ENCODE measurements at regions of chr15 and their contacts with region 1.

Region 1: DNA sequence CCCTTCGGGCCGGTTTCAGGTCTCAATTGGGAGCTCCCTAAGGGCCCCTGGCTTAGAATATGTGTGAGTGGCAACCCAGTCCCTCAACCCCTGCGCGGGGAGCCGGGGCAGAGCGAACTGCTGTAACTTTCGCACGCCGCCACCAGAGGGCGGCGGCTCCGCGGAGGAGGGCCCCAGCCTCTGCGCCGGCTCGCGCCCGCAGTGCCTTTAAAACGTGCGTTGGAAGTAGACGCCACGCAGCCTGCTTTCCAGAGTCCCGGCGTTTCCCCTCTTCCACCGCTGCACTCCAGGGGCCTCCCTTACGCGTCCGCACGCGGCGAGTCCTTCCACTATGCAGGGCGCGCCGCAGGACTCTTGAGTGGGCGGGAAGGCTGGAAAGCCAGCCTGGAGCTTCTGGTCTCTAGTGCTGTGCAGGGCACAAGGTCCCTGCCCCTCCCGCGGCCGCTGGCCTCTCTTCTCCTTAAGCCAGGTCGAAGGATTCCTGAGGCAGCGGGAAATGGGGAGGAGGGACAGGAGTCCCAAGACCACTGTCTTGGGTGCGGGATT is 23.7 kb upstream of the RNU6-1 start:
- DNase-seq: peak; percentile 63 to 93 (median 80)
- ATAC-seq: peak; percentile 98 to 99 (median 99)
- H3K4me3 ChIP-seq: peak overlapping the region in 3 of 4 donors; percentile 18 to 49 (median 38)
- H3K27ac ChIP-seq: peak overlapping the region in 1 of 4 donors; percentile 16
- H3K4me1 ChIP-seq: no peaks in the 10 kb centered on the region
- H3K27me3 ChIP-seq: no peaks in the 10 kb centered on the region
- CTCF ChIP-seq: peak; percentile 71 to 94 (median 87)

Region 2: GRCh38 chr15:68042156-68042854 is 178.8 kb after region 1 on chr15:
- intact Hi-C with region 1: loop called in 1 of 3 experiments (anchors 10 kb)
- DNase-seq: no peak
- ATAC-seq: peak; percentile 46 to 81 (median 68)
- H3K4me3 ChIP-seq: no peak overlapping the region
- H3K27ac ChIP-seq: peak overlapping the region in 1 of 4 donors; percentile 16
- H3K4me1 ChIP-seq: peaks cover 0 to 10% (median 6%) of the 10 kb centered on the region in 3 donors
- H3K27me3 ChIP-seq: no peaks in the 10 kb centered on the region
- CTCF ChIP-seq: no peak

Region 3: DNA sequence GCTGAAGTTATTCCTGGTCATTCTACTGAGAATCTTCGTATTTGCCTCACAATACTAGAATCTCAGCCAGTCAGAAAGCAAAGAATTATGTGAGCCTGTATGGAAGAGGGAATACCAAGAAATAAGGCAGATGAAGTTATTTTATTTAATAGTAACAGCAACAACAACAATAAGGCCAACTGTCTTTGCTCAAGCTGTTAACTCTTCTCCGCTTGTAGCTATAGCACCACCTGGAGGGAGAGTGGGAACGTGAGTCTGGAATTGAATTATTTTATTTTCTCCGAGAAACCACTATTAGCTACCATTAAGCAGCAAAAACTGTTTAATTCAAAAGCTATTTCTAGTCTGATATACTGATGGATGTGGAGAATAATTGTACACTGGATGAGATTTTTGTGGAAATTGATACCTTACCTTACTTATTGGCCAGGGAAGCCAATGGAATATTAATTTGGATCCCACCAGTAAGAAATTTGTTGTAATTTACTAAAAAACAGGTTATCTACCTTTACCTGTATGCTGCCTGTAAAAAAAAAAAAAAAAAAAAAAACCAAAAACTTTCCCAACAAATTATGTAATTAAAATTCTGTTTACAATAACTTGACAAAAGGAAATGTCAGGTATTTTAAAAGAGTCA is 291.5 kb after region 1 on chr15:
- intact Hi-C with region 1: loop called (anchors 5 to 10 kb)
- DNase-seq: peak in 3 of 6 donors; percentile 28 to 53 (median 41)
- ATAC-seq: peak in 3 of 4 donors; percentile 85 to 89 (median 88)
- H3K4me3 ChIP-seq: no peak overlapping the region
- H3K27ac ChIP-seq: no peak overlapping the region
- H3K4me1 ChIP-seq: peaks cover 0 to 4% (median 0%) of the 10 kb centered on the region in 3 donors
- H3K27me3 ChIP-seq: no peaks in the 10 kb centered on the region
- CTCF ChIP-seq: peak; percentile 14 to 62 (median 47)